ENCODE measurements at regions of chr7 and their contacts with region 1.

Region 1: DNA sequence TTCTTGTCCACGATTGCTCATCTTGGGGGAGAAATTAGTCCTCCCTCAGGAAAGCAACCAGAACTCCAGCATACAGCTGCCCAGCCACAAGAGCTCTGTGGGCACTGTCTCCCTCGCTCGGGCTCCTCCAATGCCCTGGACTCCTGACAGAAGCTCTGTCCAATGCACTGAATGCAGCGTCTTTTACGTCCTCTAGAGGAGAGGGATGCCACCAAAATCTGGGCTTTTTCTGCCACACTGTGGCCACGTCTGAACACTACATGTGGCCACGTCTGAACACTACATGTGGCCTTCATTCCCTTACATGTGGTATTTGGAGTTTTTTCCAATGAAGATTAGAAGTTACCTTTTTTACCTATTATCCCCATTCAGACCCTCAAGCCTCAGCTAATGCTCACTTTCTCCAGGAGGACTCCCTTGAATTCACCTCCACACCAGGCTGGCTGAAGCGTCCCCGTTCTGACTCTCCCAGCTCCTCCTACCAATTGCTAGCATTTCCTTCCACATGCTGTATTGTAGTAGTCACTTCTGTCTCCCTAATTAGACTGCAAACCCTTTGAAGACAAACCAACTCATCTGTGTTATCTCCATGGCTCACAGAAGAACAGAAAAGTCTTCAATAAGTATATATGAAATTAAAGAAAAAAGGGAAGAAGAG is 134.3 kb upstream of the PDE1C start:
- DNase-seq: peak; percentile 77
- ATAC-seq: peak; percentile 96

Region 2: DNA sequence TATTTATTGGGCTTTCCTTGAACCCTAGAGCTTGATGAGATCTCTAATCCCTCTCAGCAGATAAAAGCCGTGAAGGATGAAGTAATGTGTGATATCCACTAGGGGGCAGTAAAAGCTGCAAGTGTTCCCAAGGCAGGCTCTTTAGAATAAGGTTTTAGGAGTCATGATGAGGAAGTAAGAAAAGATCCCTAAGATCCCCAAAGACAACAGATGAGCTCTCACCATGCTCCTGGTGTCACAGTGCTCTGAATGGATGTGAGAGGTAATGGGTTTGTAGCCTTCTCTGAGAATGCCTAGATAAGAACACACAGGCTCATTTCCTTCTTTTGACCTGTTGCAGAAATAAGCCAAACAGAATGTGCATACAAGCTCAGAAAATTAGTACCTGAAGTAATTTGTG is 761.0 kb before region 1 on chr7:
- intact Hi-C with region 1: loop called (anchors 10 kb)
- DNase-seq: no peak
- ATAC-seq: peak; percentile 42